Aorta (tissue), 5 donors: ENCODE measurements at regions of chr12 and their contacts with region 1.

Region 1: GRCh38 chr12:50055831-50056638 is 1.4 kb upstream of the ASIC1 start:
- DNase-seq: peak in 1 of 2 donors; percentile 29
- ATAC-seq: peak; percentile 66
- H3K4me3 ChIP-seq: no peak overlapping the region
- H3K27ac ChIP-seq: no peak overlapping the region
- H3K4me1 ChIP-seq: no peaks in the 10 kb centered on the region
- H3K27me3 ChIP-seq: no peaks in the 10 kb centered on the region

Region 2: DNA sequence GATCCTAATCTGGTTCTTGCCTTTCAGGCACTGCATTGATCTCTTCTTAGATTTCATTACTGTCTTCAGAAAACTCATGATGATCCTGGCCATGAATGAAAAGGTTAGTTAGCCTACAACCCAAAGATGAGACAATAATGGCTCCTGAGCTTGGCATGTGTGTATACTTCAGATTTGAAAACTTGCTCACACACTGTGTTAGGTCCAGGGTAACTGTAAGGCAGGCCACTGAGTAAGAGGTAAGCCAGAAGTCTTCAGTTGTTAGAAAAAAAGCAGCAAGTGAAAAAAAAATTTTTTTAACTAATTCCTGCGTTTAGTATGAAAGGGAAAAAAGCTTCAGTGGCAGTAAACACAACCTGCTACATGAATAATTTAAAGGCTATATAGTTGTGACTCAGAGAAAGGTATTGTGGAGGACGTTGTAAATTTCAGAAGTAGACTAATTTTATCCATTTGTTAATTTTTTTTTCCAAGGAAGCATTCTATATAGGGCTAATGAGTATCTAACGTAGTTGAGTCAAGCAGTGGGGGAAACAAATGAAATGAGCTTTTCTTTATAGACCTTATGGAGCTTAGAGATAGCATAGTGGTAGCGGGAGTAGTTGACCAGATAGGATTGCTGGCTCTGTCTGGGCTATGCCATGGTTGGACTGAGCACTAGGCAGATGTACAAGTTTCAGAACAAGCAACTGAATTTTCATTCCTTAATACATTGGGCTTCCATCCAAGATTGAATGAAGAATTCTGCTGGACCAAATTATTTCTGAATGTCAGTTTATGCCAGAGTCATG is 294.2 kb before region 1 on chr12:
- intact Hi-C with region 1: no loop called
- DNase-seq: no peak
- ATAC-seq: no peak
- H3K4me3 ChIP-seq: no peak overlapping the region
- H3K27ac ChIP-seq: no peak overlapping the region
- H3K4me1 ChIP-seq: no peaks in the 10 kb centered on the region
- H3K27me3 ChIP-seq: no peaks in the 10 kb centered on the region

Region 3: GRCh38 chr12:49776413-49776812 is 279.6 kb before region 1 on chr12:
- intact Hi-C with region 1: loop called in 1 of 2 experiments (anchors 10 kb)
- DNase-seq: peak; percentile 79 to 85
- ATAC-seq: peak; percentile 89
- H3K4me3 ChIP-seq: no peak overlapping the region
- H3K27ac ChIP-seq: no peak overlapping the region
- H3K4me1 ChIP-seq: no peaks in the 10 kb centered on the region
- H3K27me3 ChIP-seq: no peaks in the 10 kb centered on the region

Region 4: GRCh38 chr12:49866859-49867579 is 189.0 kb before region 1 on chr12:
- intact Hi-C with region 1: loop called in 1 of 2 experiments (anchors 10 kb)
- DNase-seq: peak; percentile 75 to 88
- ATAC-seq: peak; percentile 72
- H3K4me3 ChIP-seq: no peak overlapping the region
- H3K27ac ChIP-seq: no peak overlapping the region
- H3K4me1 ChIP-seq: no peaks in the 10 kb centered on the region
- H3K27me3 ChIP-seq: no peaks in the 10 kb centered on the region

Region 5: GRCh38 chr12:49967042-49967776 is 88.8 kb before region 1 on chr12:
- intact Hi-C with region 1: loop called (anchors 2 to 5 kb)
- DNase-seq: peak; percentile 95 to 98
- ATAC-seq: peak; percentile 93
- H3K4me3 ChIP-seq: no peak overlapping the region
- H3K27ac ChIP-seq: no peak overlapping the region
- H3K4me1 ChIP-seq: no peaks in the 10 kb centered on the region
- H3K27me3 ChIP-seq: no peaks in the 10 kb centered on the region